Activated CD4-positive, alpha-beta T cell treated with anti-CD3 and anti-CD28 coated beads for 36 hours (primary cell): ENCODE measurements at regions of chr6 and their contacts with region 1.

Region 1: DNA sequence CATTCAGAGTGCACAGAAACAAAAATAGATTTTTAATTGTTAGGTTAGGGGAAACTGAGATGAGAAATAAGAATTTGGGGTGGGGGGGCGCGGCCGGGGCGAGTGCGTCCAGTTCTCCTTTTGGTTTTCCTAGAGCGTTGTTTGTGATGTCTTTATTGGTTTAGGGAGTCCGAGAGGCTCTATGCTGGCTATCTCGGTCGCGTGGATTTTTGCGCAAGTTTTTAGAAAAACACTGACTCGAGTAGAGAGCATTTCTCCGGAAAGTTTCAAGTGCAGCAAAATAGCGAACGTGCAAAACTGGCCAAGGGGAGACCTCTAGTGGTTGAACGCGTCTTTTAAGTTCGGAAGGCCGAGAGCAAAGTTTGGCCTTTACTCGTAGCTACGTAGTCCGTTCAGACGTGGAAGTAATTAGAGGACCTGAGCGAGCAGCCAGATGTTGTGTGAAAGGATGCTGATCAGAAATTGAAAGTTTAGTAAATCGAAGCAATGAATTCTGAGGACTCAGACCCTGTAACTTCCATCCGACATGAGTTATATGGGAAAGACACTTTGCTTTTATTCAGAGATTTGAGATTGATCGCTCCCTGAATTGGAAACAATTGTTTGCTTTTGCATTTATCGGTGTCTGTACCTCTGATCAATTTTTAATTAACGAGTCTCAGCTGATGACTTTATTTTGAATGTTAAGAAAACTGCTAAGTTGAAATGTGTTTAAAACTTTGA is 2.7 kb downstream of the L3MBTL3 start:
- DNase-seq: peak; percentile 85
- ATAC-seq: peak; percentile 59
- H3K4me3 Mint-ChIP-seq: peak overlapping the region; percentile 91
- H3K27ac Mint-ChIP-seq: peak overlapping the region; percentile 90
- H3K4me1 Mint-ChIP-seq: peaks cover 38% of the 10 kb centered on the region
- H3K27me3 Mint-ChIP-seq: no peaks in the 10 kb centered on the region

Region 2: DNA sequence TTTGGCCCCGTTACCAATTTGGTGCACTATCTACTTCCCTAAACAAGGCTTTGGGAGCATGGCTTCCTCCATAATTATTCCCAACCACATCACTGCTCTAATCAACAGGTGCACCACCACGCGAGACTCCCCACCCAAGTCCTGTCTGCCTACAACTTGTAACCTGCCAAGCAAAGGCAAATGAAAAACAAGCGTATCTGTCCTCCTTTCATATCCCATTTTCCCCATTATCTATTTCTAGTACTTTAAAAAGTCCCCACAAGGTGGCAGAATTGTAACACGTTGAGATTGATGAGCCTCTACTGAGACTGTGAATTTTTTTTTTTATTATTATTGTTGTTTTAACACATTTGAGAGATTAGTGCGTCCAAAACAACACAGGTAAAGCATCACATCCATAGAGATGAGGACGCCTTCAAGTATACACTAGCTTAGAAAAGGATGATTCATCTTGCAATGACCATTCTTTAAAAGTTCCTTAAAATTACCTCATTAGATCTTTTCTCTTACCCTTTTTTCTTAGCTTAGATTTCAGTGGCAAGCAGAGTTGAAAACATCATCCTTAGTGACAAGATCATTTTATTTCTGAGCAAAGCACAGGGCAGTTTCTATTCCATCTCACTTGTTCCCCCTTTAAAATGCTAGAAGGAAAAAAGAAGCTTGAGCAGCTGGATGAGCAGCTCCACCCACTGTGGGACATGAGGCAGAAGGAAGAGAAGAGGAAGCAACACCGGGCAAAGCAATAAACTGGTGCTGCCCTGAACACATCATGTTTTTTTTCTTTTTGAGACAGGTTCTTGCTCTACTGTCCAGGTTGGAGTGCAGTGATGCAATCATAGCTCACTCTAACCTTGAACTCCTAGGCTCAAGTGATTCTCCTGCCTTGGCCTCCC is 521.9 kb before region 1 on chr6:
- CTCF ChIA-PET with region 1: interaction called, 8 read pairs
- POLR2A ChIA-PET with region 1: no interaction called
- intact Hi-C with region 1: loop called (anchors 2 to 5 kb)
- DNase-seq: no peak
- ATAC-seq: peak; percentile 56
- H3K4me3 Mint-ChIP-seq: peak overlapping the region; percentile 47
- H3K27ac Mint-ChIP-seq: peak overlapping the region; percentile 88
- H3K4me1 Mint-ChIP-seq: peaks cover 66% of the 10 kb centered on the region
- H3K27me3 Mint-ChIP-seq: no peaks in the 10 kb centered on the region

Region 3: GRCh38 chr6:129730477-129731165 is 290.4 kb before region 1 on chr6:
- CTCF ChIA-PET with region 1: interaction called, 5 read pairs
- POLR2A ChIA-PET with region 1: no interaction called
- intact Hi-C with region 1: loop called in 1 of 2 experiments (anchors 5 kb)
- DNase-seq: peak; percentile 27
- ATAC-seq: peak; percentile 39
- H3K4me3 Mint-ChIP-seq: no peak overlapping the region
- H3K27ac Mint-ChIP-seq: peak overlapping the region; percentile 68
- H3K4me1 Mint-ChIP-seq: peaks cover 9% of the 10 kb centered on the region
- H3K27me3 Mint-ChIP-seq: no peaks in the 10 kb centered on the region

Region 4: GRCh38 chr6:129893640-129894039 is 127.4 kb before region 1 on chr6:
- CTCF ChIA-PET with region 1: interaction called, 4 read pairs
- POLR2A ChIA-PET with region 1: no interaction called
- intact Hi-C with region 1: loop called (anchors 1 kb)
- DNase-seq: no peak
- ATAC-seq: no peak
- H3K4me3 Mint-ChIP-seq: no peak overlapping the region
- H3K27ac Mint-ChIP-seq: no peak overlapping the region
- H3K4me1 Mint-ChIP-seq: peaks cover 10% of the 10 kb centered on the region
- H3K27me3 Mint-ChIP-seq: no peaks in the 10 kb centered on the region

Region 5: DNA sequence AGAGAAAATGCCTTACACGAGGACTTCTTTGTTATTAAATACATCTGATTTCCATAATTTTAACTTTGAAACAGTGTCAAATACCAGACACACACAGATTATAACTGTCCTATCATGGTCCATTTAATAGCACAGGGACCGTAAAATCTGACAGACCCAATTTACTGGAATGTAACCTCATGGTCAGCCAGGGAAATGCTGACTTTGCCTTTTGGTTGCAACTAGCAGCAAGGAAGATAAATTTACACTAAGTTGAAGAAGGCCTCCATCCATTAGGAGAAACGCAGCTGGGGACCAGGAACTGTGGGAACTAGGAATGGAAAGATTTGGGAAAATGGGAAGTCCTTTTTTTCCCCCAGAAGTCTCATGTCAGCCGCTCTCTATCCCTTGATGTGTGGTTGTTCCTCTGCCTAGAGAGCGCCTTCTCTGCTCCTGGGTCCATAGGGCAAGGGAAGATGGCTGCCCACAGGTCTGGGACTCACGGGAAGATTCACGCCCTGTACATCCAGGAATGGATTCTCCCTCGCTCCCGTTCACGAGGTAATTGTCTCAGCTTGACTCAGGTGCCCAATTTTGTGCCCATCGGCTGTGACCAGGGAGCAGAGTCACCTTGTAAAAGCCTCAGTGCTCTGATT is 77.3 kb before region 1 on chr6:
- CTCF ChIA-PET with region 1: interaction called, 6 read pairs
- POLR2A ChIA-PET with region 1: no interaction called
- intact Hi-C with region 1: loop called in 1 of 2 experiments (anchors 5 kb)
- DNase-seq: no peak
- ATAC-seq: no peak
- H3K4me3 Mint-ChIP-seq: no peak overlapping the region
- H3K27ac Mint-ChIP-seq: no peak overlapping the region
- H3K4me1 Mint-ChIP-seq: no peaks in the 10 kb centered on the region
- H3K27me3 Mint-ChIP-seq: peaks cover 6% of the 10 kb centered on the region

Region 6: GRCh38 chr6:130189531-130190397 is 168.7 kb after region 1 on chr6:
- CTCF ChIA-PET with region 1: no interaction called
- POLR2A ChIA-PET with region 1: no interaction called
- intact Hi-C with region 1: no loop called
- DNase-seq: no peak
- ATAC-seq: no peak
- H3K4me3 Mint-ChIP-seq: no peak overlapping the region
- H3K27ac Mint-ChIP-seq: peak overlapping the region; percentile 13
- H3K4me1 Mint-ChIP-seq: peaks cover 76% of the 10 kb centered on the region
- H3K27me3 Mint-ChIP-seq: no peaks in the 10 kb centered on the region